ENCODE measurements at regions of chr1 and their contacts with region 1.

Region 1: GRCh38 chr1:236142253-236143103 is at the start of gene GPR137B:
- DNase-seq: peak; percentile 50
- ATAC-seq: peak; percentile 75
- H3K4me3 Mint-ChIP-seq: peak within 1 kb of the TSS; percentile 96
- H3K27ac Mint-ChIP-seq: peak within 1 kb of the TSS; percentile 89
- H3K4me1 Mint-ChIP-seq: peaks cover 29% of the 10 kb centered on the region
- H3K27me3 Mint-ChIP-seq: peaks cover 33% of the 10 kb centered on the region
- CTCF ChIP-seq: no peak
- total RNA-seq, gene GPR137B: 10.6 and 11.8 TPM in 2 replicates

Region 2: GRCh38 chr1:234599617-234600417 is 1542.7 kb before region 1 on chr1:
- CTCF ChIA-PET with region 1: no interaction called
- POLR2A ChIA-PET with region 1: no interaction called
- intact Hi-C with region 1: loop called (anchors 10 kb)
- DNase-seq: peak; percentile 67
- ATAC-seq: peak; percentile 73
- H3K4me3 Mint-ChIP-seq: peak overlapping the region; percentile 86
- H3K27ac Mint-ChIP-seq: peak overlapping the region; percentile 89
- H3K4me1 Mint-ChIP-seq: peaks cover 66% of the 10 kb centered on the region
- H3K27me3 Mint-ChIP-seq: no peaks in the 10 kb centered on the region
- CTCF ChIP-seq: no peak

Region 3: GRCh38 chr1:236064674-236065508 is 77.6 kb before region 1 on chr1 and contains the start of gene NID1:
- CTCF ChIA-PET with region 1: no interaction called
- POLR2A ChIA-PET with region 1: interaction called, 3 read pairs
- intact Hi-C with region 1: loop called (anchors 5 kb)
- DNase-seq: peak; percentile 38
- ATAC-seq: peak; percentile 18
- H3K4me3 Mint-ChIP-seq: peak within 1 kb of the TSS; percentile 70
- H3K27ac Mint-ChIP-seq: no peak within 1 kb of the TSS
- H3K4me1 Mint-ChIP-seq: peaks cover 33% of the 10 kb centered on the region
- H3K27me3 Mint-ChIP-seq: peaks cover 25% of the 10 kb centered on the region
- CTCF ChIP-seq: no peak
- total RNA-seq, gene NID1: 0.04 and 0.10 TPM in 2 replicates

Region 4: GRCh38 chr1:236156512-236157208 is 14.2 kb after region 1 on chr1:
- CTCF ChIA-PET with region 1: no interaction called
- POLR2A ChIA-PET with region 1: interaction called, 33 read pairs
- intact Hi-C with region 1: loop called (anchors 1 kb)
- DNase-seq: peak; percentile 44
- ATAC-seq: peak; percentile 85
- H3K4me3 Mint-ChIP-seq: peak overlapping the region; percentile 52
- H3K27ac Mint-ChIP-seq: peak overlapping the region; percentile 83
- H3K4me1 Mint-ChIP-seq: peaks cover 57% of the 10 kb centered on the region
- H3K27me3 Mint-ChIP-seq: peaks cover 2% of the 10 kb centered on the region
- CTCF ChIP-seq: no peak

Region 5: GRCh38 chr1:236214761-236215160 is 72.3 kb after region 1 on chr1:
- CTCF ChIA-PET with region 1: no interaction called
- POLR2A ChIA-PET with region 1: no interaction called
- intact Hi-C with region 1: loop called (anchors 5 kb)
- DNase-seq: no peak
- ATAC-seq: no peak
- H3K4me3 Mint-ChIP-seq: no peak overlapping the region
- H3K27ac Mint-ChIP-seq: no peak overlapping the region
- H3K4me1 Mint-ChIP-seq: no peaks in the 10 kb centered on the region
- H3K27me3 Mint-ChIP-seq: no peaks in the 10 kb centered on the region
- CTCF ChIP-seq: no peak

Region 6: GRCh38 chr1:236523701-236524141 is 381.2 kb after region 1 on chr1 and contains the start of gene LGALS8:
- CTCF ChIA-PET with region 1: no interaction called
- POLR2A ChIA-PET with region 1: no interaction called
- intact Hi-C with region 1: loop called (anchors 2 kb)
- DNase-seq: peak; percentile 69
- ATAC-seq: peak; percentile 60
- H3K4me3 Mint-ChIP-seq: peak within 1 kb of the TSS; percentile 95
- H3K27ac Mint-ChIP-seq: peak within 1 kb of the TSS; percentile 90
- H3K4me1 Mint-ChIP-seq: peaks cover 12% of the 10 kb centered on the region
- H3K27me3 Mint-ChIP-seq: no peaks in the 10 kb centered on the region
- CTCF ChIP-seq: no peak
- total RNA-seq, gene LGALS8: 36.0 and 37.4 TPM in 2 replicates

Region 7: DNA sequence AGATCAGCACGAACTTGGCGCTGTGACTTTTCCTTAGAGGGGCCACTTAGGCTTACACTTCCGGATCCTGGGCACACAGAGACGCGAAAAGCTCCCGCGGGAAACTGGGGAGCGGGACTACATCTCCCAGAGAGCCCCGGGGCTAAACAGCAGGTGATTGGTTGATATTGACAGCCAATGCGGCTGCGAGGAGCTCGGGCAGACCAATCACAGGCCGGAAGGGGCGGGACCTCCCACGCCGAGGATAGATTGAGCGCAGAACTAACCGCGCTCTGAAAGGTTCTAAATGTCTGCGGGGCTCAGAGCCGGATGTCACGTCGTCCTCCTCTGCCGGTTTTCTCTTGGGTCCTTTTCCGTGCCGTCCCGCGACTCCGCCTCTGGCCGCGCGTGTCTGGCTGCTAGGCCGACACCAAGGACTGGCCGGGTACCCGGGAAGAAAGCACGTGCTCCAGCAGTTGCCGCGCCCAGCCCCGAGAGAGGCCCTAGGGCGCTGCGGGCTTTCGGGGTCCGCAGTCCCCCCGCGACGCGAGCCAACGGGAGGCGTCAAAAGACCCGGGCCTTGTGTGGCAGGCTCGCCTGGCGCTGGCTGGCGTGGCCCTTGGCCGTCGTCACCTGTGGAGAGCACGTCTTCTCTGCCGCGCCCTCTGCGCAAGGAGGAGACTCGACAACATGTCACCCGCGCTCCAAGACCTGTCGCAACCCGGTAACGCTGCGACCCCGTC is 652.7 kb after region 1 on chr1 and contains the start of gene MTR:
- CTCF ChIA-PET with region 1: no interaction called
- POLR2A ChIA-PET with region 1: no interaction called
- intact Hi-C with region 1: loop called (anchors 2 kb)
- DNase-seq: peak; percentile 91
- ATAC-seq: peak; percentile 94
- H3K4me3 Mint-ChIP-seq: peak within 1 kb of the TSS; percentile 97
- H3K27ac Mint-ChIP-seq: peak within 1 kb of the TSS; percentile 98
- H3K4me1 Mint-ChIP-seq: peaks cover 41% of the 10 kb centered on the region
- H3K27me3 Mint-ChIP-seq: peaks cover 2% of the 10 kb centered on the region
- CTCF ChIP-seq: no peak
- total RNA-seq, gene MTR: 31.2 and 37.1 TPM in 2 replicates

Measured in activated B cell treated with CpG ODN at 0.5 μM for 24 hours (primary cell).